ENCODE measurements at regions of chr7 and their contacts with region 1.

Region 1: GRCh38 chr7:134480736-134481135 is 21.8 kb upstream of the AKR1B1 start:
- DNase-seq: peak; percentile 59 to 94
- H3K4me3 ChIP-seq: peak overlapping the region; percentile 37; the same call in 1 of the 2 replicates
- H3K27ac ChIP-seq: peak overlapping the region; percentile 88
- H3K4me1 ChIP-seq: peaks cover 65% of the 10 kb centered on the region
- H3K27me3 ChIP-seq: no peaks in the 10 kb centered on the region
- CTCF ChIP-seq: no peak

Region 2: DNA sequence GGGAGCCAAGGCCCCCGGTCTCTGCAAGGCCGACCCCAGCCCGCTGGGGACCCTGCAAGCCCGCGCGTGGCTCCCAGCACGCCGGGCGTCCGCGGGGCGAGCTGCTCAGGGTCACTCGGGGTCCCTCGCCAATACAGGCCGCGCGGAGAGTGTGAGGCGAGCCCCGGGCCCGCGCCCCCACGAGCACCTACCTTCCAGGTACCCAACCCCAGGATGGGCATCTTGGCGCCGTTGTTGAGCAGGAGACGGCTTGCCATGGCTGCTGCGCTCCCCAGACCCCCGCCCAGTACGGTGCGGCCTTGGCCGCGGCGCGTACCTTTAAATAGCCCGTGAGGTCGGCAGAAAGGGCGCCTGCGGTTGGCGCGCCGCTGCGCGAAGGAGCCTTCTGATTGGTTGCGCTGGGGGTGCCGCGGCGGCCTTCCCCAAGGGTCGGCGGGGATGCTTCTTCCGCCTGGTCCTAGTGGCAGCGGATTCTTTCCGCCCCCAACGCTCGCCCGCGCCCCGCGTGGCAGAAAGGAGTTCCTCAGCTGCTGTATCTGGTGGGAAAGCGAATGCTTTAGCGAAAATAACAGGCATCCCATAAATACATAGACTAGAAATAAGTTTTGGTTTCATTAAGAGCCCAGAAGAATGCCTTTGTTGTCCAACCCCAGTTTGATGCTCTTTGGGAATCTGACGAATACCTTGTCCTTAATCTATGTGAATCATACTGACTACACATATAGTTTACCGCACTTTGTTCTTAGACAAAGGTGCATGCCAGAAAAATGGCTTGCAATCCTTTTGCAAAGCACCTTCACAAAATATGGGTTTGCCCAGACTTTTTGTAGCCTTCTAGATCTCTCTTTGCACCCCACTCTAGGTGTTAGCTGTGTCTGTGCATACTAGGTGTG is 21.7 kb before region 1 on chr7 and contains the start of gene AKR1B1:
- CTCF ChIA-PET with region 1: interaction called, 5 read pairs
- POLR2A ChIA-PET with region 1: interaction called, 3 read pairs
- intact Hi-C with region 1: loop called (anchors 2 kb)
- DNase-seq: peak; percentile 88 to 95
- H3K4me3 ChIP-seq: peak within 1 kb of the TSS; percentile 93
- H3K27ac ChIP-seq: peak within 1 kb of the TSS; percentile 97
- H3K4me1 ChIP-seq: peaks cover 74% of the 10 kb centered on the region
- H3K27me3 ChIP-seq: no peaks in the 10 kb centered on the region
- CTCF ChIP-seq: peak; percentile 36; the same call in 1 of the 2 replicates
- total RNA-seq, gene AKR1B1: 1,009 and 1,328 TPM in 2 replicates

Region 3: GRCh38 chr7:134553976-134554375 is 73.2 kb after region 1 on chr7:
- CTCF ChIA-PET with region 1: no interaction called
- POLR2A ChIA-PET with region 1: no interaction called
- intact Hi-C with region 1: no loop called
- DNase-seq: no peak
- H3K4me3 ChIP-seq: no peak overlapping the region
- H3K27ac ChIP-seq: no peak overlapping the region
- H3K4me1 ChIP-seq: peaks cover 16% of the 10 kb centered on the region
- H3K27me3 ChIP-seq: no peaks in the 10 kb centered on the region
- CTCF ChIP-seq: no peak

Measured in PC-9 (cell line).